ENCODE measurements at regions of chr12 and their contacts with region 1.

Region 1: GRCh38 chr12:47963340-47964040 is at the start of gene TMEM106C:
- DNase-seq: peak; percentile 94
- H3K4me3 Mint-ChIP-seq: peak within 1 kb of the TSS; percentile 98
- H3K27ac Mint-ChIP-seq: peak within 1 kb of the TSS; percentile 79
- H3K4me1 Mint-ChIP-seq: peaks cover 30% of the 10 kb centered on the region
- H3K27me3 Mint-ChIP-seq: peaks cover 7% of the 10 kb centered on the region
- total RNA-seq, gene TMEM106C: 226 to 247 TPM

Region 2: GRCh38 chr12:47860279-47860841 is 103.1 kb before region 1 on chr12:
- CTCF ChIA-PET with region 1: interaction called, 3 read pairs
- intact Hi-C with region 1: loop called (anchors 2 kb)
- DNase-seq: peak; percentile 69
- H3K4me3 Mint-ChIP-seq: peak overlapping the region; percentile 13
- H3K27ac Mint-ChIP-seq: peak overlapping the region; percentile 92
- H3K4me1 Mint-ChIP-seq: peaks cover 44% of the 10 kb centered on the region
- H3K27me3 Mint-ChIP-seq: no peaks in the 10 kb centered on the region

Region 3: GRCh38 chr12:47904713-47905310 is 58.7 kb before region 1 on chr12 and contains the start of gene VDR:
- CTCF ChIA-PET with region 1: interaction called, 3 read pairs
- intact Hi-C with region 1: loop called (anchors 1 kb)
- DNase-seq: peak; percentile 81
- H3K4me3 Mint-ChIP-seq: peak within 1 kb of the TSS; percentile 98
- H3K27ac Mint-ChIP-seq: peak within 1 kb of the TSS; percentile 93
- H3K4me1 Mint-ChIP-seq: peaks cover 42% of the 10 kb centered on the region
- H3K27me3 Mint-ChIP-seq: peaks cover 19% of the 10 kb centered on the region
- total RNA-seq, gene VDR: 56.4 to 57.7 TPM

Region 4: GRCh38 chr12:47990351-47991105 is 27.0 kb after region 1 on chr12:
- CTCF ChIA-PET with region 1: interaction called, 4 read pairs
- intact Hi-C with region 1: loop called (anchors 1 kb)
- DNase-seq: peak; percentile 80
- H3K4me3 Mint-ChIP-seq: no peak overlapping the region
- H3K27ac Mint-ChIP-seq: peak overlapping the region; percentile 43
- H3K4me1 Mint-ChIP-seq: peaks cover 21% of the 10 kb centered on the region
- H3K27me3 Mint-ChIP-seq: peaks cover 13% of the 10 kb centered on the region

Region 5: DNA sequence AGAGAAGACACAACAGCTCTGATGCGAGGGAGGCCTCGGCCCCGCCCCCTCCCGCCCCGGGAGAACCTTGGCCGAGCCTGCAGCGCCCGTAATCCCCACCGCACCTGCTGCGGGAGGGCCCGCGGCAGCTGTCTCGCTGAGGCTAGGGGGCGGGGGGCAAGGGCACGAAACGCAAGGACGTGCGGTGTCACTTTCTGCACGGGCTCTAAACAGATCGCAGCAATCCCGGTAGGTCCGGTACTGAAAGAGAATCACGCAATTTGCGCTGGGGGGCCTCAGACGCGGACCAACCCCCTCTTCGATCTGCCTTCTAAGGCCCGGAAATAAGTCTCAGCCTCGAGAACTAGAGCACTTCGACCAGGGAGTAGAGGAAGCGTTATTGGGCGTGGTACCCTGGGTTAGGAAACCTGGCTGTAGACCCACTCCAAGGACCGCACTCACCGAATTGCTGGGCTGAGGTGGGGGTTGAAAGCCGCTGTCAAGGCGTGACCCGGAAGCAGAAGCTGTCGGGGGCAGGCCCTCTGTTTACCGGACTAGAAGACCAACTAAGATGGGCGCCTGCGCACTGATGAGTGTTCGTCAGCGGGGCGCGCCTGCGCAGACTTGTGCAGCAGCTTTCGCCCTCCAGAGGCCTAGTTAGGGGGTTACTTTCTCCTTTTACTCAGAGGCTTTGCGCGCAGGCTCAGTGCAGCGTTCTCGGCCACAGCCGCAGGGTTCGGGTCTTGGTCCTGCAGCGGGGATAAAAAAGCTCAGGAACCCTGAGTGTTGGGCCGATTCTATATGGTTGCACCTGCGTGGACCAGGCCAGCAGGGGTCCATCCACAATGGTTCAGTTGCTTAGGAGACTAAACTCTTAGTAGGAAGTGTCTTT is 193.8 kb after region 1 on chr12 and contains the start of gene ASB8:
- CTCF ChIA-PET with region 1: interaction called, 3 read pairs
- intact Hi-C with region 1: loop called (anchors 1 kb)
- DNase-seq: peak; percentile 100
- H3K4me3 Mint-ChIP-seq: peak within 1 kb of the TSS; percentile 93
- H3K27ac Mint-ChIP-seq: peak within 1 kb of the TSS; percentile 96
- H3K4me1 Mint-ChIP-seq: peaks cover 47% of the 10 kb centered on the region
- H3K27me3 Mint-ChIP-seq: no peaks in the 10 kb centered on the region
- total RNA-seq, gene ASB8: 36.7 to 47.9 TPM

Region 6: GRCh38 chr12:48183091-48183875 is 219.8 kb after region 1 on chr12 and contains the start of gene CCDC184:
- CTCF ChIA-PET with region 1: interaction called, 5 read pairs
- intact Hi-C with region 1: loop called (anchors 2 kb)
- DNase-seq: peak; percentile 70
- H3K4me3 Mint-ChIP-seq: peak within 1 kb of the TSS; percentile 88
- H3K27ac Mint-ChIP-seq: no peak within 1 kb of the TSS
- H3K4me1 Mint-ChIP-seq: peaks cover 12% of the 10 kb centered on the region
- H3K27me3 Mint-ChIP-seq: peaks cover 15% of the 10 kb centered on the region
- total RNA-seq, gene CCDC184: 0.14 TPM in 1 of 2 experiments, not detected in the other

Region 7: GRCh38 chr12:48379780-48380179 is 416.3 kb after region 1 on chr12:
- CTCF ChIA-PET with region 1: no interaction called
- intact Hi-C with region 1: no loop called
- DNase-seq: no peak
- H3K4me3 Mint-ChIP-seq: no peak overlapping the region
- H3K27ac Mint-ChIP-seq: no peak overlapping the region
- H3K4me1 Mint-ChIP-seq: no peaks in the 10 kb centered on the region
- H3K27me3 Mint-ChIP-seq: no peaks in the 10 kb centered on the region

Region 8: DNA sequence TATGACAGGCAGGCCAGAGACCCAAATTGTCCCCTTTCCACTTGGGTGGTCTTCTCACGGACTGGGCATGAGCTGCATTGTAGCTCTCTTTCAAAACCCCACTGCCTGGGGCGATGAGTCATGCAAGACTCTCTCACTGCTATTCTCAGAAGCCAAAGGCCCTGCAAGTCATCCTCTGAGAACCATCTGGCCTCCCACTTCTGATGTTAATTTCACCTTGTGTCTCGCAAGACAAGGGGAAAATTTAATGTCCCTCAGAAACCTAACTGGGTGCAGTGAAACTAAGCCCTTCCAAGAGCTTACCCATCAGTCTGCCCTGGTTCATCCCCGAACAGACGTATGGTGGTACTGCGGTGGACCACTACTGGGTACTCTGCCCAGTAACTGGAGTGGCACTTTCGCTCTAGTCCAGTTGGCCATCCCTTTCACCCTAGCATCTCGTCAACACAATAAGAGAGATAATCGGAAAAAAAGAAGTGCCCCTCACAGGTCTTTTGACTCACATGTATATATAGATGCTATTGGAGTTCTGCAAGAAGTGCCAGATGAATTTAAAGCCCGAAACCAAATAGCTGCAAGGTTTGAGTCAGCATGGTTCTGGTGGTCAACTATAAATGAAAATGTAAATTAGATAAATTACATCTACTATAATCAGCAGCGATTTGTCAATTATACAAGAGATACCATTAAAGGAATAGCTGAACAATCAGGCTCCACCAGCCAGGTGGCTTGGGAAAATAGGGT is 637.7 kb after region 1 on chr12:
- CTCF ChIA-PET with region 1: no interaction called
- intact Hi-C with region 1: loop called (anchors 5 kb)
- DNase-seq: peak; percentile 16
- H3K4me3 Mint-ChIP-seq: no peak overlapping the region
- H3K27ac Mint-ChIP-seq: no peak overlapping the region
- H3K4me1 Mint-ChIP-seq: no peaks in the 10 kb centered on the region
- H3K27me3 Mint-ChIP-seq: no peaks in the 10 kb centered on the region